MCF 10A (cell line): ENCODE measurements at regions of chr4 and their contacts with region 1.

Region 1: DNA sequence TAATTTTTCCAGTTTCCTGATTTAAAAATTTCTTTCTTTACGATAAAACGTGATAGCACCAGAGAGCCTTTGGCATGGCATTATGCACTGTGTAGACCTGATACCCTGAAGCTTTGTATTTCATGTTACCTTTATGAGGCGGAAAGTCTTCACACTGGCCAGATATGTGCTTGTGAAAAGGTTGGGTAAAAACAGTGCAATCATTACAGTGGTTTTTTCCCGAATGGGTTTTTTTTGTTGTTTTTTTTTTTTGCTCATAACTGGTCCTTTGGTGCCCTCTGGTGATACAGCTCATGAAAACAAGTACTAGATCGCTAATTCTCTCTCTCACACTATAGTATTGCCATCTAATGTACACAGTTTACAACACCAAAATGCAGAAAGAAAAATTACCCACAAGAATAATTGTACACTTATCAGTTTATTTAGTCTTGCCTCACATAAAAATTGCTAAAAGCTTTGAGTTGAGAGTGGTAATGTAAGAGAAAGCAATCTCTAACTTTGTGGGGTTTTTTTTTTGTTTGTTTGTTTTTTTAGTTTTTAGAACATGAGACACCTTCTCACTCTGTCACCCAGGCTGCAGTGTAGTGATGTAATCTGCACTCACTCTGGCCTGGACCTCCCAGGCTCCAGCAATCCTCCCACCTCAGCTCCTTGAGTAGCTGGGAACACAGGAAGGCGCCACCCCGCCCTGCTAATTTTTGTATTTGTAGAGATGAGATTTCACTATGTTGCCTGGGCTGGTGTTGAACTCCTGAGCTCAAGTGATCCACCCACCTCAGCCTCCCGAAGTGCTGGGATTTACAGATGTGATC is 21.3 kb downstream of the SPCS3 start:
- DNase-seq: peak; percentile 60
- H3K4me3 Mint-ChIP-seq: no peak overlapping the region
- H3K27ac Mint-ChIP-seq: no peak overlapping the region
- H3K4me1 Mint-ChIP-seq: peaks cover 8% of the 10 kb centered on the region
- H3K27me3 Mint-ChIP-seq: no peaks in the 10 kb centered on the region
- CTCF ChIP-seq: peak; percentile 32

Region 2: GRCh38 chr4:175947117-175947722 is 393.9 kb before region 1 on chr4:
- CTCF ChIA-PET with region 1: interaction called, 17 read pairs
- POLR2A ChIA-PET with region 1: no interaction called
- intact Hi-C with region 1: loop called (anchors 1 kb)
- DNase-seq: peak; percentile 42
- H3K4me3 Mint-ChIP-seq: no peak overlapping the region
- H3K27ac Mint-ChIP-seq: no peak overlapping the region
- H3K4me1 Mint-ChIP-seq: peaks cover 6% of the 10 kb centered on the region
- H3K27me3 Mint-ChIP-seq: no peaks in the 10 kb centered on the region
- CTCF ChIP-seq: peak; percentile 52

Region 3: DNA sequence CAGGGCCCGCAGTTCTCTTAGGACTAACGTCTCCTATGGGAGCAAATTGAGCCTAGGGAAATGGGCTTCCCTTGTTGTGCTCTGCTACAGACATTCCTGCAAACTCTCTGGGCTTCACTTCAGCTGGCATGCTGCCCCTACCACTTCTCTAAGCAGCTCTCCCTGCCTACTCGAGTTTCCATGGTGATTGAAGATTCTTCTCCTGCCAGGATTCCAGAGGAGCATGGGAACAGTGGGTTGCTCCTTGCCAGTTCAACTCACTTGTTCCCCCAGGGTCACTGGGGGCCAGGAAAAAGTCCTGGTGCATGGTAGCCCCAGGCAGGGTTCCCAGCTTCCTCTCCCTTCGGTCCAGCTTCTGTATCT is 296.5 kb before region 1 on chr4:
- CTCF ChIA-PET with region 1: interaction called, 10 read pairs
- POLR2A ChIA-PET with region 1: no interaction called
- intact Hi-C with region 1: no loop called
- DNase-seq: no peak
- H3K4me3 Mint-ChIP-seq: no peak overlapping the region
- H3K27ac Mint-ChIP-seq: no peak overlapping the region
- H3K4me1 Mint-ChIP-seq: peaks cover 5% of the 10 kb centered on the region
- H3K27me3 Mint-ChIP-seq: no peaks in the 10 kb centered on the region
- CTCF ChIP-seq: no peak

Region 4: DNA sequence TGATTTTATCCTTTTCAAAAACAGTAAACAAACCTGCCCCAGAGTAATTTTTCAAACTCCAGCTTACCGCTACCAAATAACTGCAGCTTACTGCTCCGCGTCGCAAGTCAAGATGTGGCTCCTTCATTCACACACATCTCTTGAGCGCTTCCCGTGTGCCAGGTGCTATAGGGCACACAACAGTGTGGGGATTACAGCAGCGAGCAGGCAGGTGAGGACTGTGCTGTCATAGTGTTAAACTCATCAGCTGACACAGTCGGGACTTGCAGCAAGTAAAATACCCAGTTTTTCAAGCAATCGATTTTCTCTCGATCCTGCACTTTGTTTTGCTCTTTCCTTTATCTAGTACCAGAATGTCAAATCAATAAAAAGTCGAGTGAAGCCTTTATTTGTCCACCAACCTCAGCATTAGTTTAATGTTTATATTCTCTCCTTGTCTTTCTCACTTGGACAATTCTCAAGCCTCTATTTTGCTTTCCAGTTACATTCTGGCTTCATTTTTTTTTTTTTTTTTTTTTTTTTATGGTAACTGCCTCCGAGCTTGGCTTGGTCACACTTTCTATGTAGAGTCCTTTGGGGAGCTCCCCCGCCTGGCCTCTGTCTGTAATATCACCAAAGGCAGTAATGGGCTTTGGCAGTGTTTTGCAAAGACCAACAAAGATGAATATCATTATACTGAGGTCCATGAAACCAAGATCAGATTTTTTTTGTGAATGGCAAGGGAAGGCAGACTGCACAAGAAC is 63.7 kb before region 1 on chr4:
- CTCF ChIA-PET with region 1: interaction called, 19 read pairs
- POLR2A ChIA-PET with region 1: no interaction called
- intact Hi-C with region 1: loop called (anchors 2 kb)
- DNase-seq: peak; percentile 69
- H3K4me3 Mint-ChIP-seq: no peak overlapping the region
- H3K27ac Mint-ChIP-seq: peak overlapping the region; percentile 63
- H3K4me1 Mint-ChIP-seq: peaks cover 17% of the 10 kb centered on the region
- H3K27me3 Mint-ChIP-seq: no peaks in the 10 kb centered on the region
- CTCF ChIP-seq: peak; percentile 59

Region 5: DNA sequence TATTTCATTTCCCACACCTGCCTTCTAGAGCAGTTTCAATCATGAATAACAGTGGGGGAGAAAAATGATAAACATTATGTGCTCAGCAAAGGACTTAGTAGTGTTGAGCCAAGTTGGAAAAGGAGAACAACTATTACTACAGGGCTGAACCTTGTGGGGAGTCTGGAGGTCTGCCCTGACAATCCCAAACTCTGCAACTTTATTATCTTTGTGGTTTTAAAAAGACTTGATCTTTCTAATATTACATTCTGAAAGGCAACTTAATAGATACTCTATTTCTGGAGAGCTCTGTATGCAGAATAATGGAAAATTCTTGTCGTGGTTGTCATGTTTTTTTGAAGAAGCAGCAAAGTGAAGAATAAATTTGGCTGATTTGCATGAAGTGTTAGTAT is 94.8 kb after region 1 on chr4:
- CTCF ChIA-PET with region 1: no interaction called
- POLR2A ChIA-PET with region 1: no interaction called
- intact Hi-C with region 1: no loop called
- DNase-seq: no peak
- H3K4me3 Mint-ChIP-seq: no peak overlapping the region
- H3K27ac Mint-ChIP-seq: peak overlapping the region; percentile 66
- H3K4me1 Mint-ChIP-seq: peaks cover 21% of the 10 kb centered on the region
- H3K27me3 Mint-ChIP-seq: no peaks in the 10 kb centered on the region
- CTCF ChIP-seq: no peak